ENCODE measurements at regions of chr12 and their contacts with region 1.

Region 1: GRCh38 chr12:132956011-132956788 is at the start of gene ZNF605:
- DNase-seq: peak; percentile 82
- H3K4me3 Mint-ChIP-seq: peak within 1 kb of the TSS; percentile 96
- H3K27ac Mint-ChIP-seq: peak within 1 kb of the TSS; percentile 96
- H3K4me1 Mint-ChIP-seq: peaks cover 12% of the 10 kb centered on the region
- H3K27me3 Mint-ChIP-seq: no peaks in the 10 kb centered on the region
- total RNA-seq, gene ZNF605: 7.3 and 8.2 TPM in 2 replicates

Region 2: DNA sequence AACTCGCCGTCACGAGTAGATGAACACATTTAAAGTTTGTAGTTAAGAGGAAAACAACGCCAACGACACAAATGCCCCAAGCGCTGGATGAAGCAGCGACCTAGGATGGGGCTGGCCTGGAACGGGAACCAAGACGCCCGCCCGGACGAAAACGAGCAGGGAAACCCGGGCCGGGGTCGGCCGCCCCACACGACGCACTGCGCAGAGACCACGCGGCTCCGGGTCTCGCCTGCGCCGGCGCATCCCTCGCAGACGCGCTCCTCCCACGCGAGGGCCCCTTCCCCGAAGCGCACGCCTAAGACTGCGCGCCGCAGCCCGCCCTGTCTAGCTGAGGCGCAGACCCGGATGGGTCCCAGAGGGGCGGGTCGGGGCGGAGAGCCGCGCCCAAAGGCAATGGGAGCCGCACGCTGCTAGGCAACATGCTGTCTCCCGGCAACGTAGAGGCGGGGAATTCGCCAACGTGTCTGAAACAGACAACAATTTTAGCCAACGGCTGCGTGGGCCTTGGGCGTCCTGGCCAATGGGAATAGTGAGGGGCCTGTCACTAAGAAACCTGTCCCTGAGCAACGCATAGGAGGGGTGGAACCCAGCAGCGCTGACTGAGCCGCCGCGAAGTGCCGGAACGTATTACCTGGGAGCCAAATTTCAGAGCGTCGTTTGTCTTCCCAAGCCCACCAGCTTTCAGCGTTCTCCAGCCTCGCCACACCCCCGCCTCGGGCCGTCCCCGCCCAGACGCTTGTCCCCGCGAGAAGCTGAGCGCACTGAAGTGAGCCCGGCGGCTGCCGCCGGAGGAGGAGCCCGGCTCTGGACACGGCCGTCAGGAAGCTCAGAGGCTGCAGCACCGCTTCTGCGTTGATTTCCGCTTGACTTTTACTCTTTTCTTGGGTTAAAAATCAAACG is 47.8 kb before region 1 on chr12:
- intact Hi-C with region 1: loop called (anchors 1 kb)
- DNase-seq: peak; percentile 93
- H3K4me3 Mint-ChIP-seq: peak overlapping the region; percentile 86
- H3K27ac Mint-ChIP-seq: peak overlapping the region; percentile 94
- H3K4me1 Mint-ChIP-seq: peaks cover 4% of the 10 kb centered on the region
- H3K27me3 Mint-ChIP-seq: peaks cover 13% of the 10 kb centered on the region

Measured in activated T-helper 2 cell treated with anti-CD3 and anti-CD28 coated beads, Interferon-gamma antibody, Interleukin-2, Interleukin-4, amounts not matched to agents 10 μg/mL and 5 μg/mL and 100 μg/mL, durations not matched to agents 14 hours and 24 hours and 36 hours (primary cell).